Activated B cell treated with CpG ODN at 0.5 μM for 24 hours (primary cell): ENCODE measurements at regions of chr18 and their contacts with region 1.

Region 1: GRCh38 chr18:32092422-32093101 is 888 bp downstream of the RNF138 start:
- DNase-seq: peak; percentile 100
- ATAC-seq: peak; percentile 90
- H3K4me3 Mint-ChIP-seq: peak overlapping the region; percentile 98
- H3K27ac Mint-ChIP-seq: peak overlapping the region; percentile 96
- H3K4me1 Mint-ChIP-seq: peaks cover 44% of the 10 kb centered on the region
- H3K27me3 Mint-ChIP-seq: no peaks in the 10 kb centered on the region
- CTCF ChIP-seq: no peak

Region 2: DNA sequence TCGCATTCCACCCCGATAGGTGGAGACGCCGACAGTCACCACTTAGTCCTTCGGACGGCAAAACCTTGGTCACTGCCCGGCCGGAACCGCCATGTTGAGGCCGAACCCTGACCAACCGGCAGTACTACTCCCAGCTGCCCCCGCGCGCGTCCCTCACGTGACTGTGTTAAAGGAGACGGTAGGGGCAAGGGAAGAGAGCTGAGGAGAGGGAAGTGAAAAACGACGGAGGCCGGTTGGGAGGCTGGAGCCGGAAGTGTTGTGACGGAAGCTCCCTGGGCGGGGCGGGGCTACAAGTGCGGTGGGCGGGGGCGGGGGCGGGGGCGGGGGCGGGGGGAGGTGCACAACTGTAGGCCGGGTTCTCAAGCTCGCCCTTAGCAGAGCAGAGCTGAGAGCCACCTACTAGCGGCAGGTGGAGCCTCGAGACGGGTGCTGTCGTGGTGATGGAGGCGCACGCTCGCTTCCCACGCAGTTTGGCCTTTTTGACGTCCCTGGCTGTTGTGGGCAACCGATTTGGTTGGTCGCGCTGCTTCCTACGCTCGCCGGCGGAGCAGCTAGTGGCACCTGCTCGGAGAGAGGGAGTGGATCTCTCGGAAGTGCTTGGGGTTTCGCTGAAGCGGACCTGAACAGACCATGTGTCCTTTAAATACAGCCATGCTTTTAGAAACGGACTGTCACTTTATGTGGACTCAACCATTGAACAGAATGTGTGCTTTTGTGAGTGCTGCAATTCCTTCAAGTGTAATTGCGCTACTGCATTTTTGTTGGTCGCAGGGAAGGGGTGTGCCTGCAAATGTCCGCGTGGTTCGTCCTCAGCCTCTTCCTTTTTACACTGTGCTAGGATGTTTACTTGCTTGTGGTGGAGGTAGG is 149.3 kb before region 1 on chr18 and contains the start of gene TRAPPC8:
- CTCF ChIA-PET with region 1: no interaction called
- POLR2A ChIA-PET with region 1: interaction called, 110 read pairs
- intact Hi-C with region 1: loop called (anchors 1 kb)
- DNase-seq: peak; percentile 94
- ATAC-seq: peak; percentile 82
- H3K4me3 Mint-ChIP-seq: peak within 1 kb of the TSS; percentile 100
- H3K27ac Mint-ChIP-seq: peak within 1 kb of the TSS; percentile 100
- H3K4me1 Mint-ChIP-seq: peaks cover 48% of the 10 kb centered on the region
- H3K27me3 Mint-ChIP-seq: no peaks in the 10 kb centered on the region
- CTCF ChIP-seq: no peak
- total RNA-seq, gene TRAPPC8: 62.9 and 69.2 TPM in 2 replicates

Region 3: DNA sequence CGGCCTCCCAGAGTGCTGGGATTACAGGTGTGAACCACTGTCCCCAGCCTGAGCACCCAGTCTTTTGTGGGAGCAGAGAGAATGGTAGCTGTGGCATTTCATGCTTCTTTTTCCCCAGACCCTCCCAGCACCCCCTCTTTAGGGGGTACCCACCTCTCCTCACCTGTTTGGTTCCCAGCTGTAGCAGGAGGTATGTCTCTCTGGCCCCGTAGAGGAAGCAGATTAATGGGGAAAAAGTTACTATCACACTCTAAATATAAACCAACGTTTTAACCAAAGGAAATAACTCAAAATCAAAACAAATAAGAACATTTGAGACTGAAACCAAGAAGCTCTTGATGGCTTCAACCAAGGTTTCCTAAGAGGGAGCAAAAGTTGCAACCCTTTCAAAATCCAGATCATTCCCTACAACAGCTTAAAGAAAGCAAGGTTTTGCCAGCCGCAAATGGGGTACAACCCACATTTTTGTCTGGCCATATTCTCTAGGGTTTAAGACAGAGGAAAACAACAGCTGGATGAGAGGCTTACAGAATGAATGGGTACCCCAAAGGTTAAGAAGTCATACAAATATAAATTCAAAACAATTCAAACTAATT is 66.0 kb before region 1 on chr18:
- CTCF ChIA-PET with region 1: no interaction called
- POLR2A ChIA-PET with region 1: interaction called, 10 read pairs
- intact Hi-C with region 1: no loop called
- DNase-seq: no peak
- ATAC-seq: no peak
- H3K4me3 Mint-ChIP-seq: no peak overlapping the region
- H3K27ac Mint-ChIP-seq: no peak overlapping the region
- H3K4me1 Mint-ChIP-seq: peaks cover 27% of the 10 kb centered on the region
- H3K27me3 Mint-ChIP-seq: no peaks in the 10 kb centered on the region
- CTCF ChIP-seq: no peak

Region 4: GRCh38 chr18:32048507-32049091 is 44.0 kb before region 1 on chr18:
- CTCF ChIA-PET with region 1: no interaction called
- POLR2A ChIA-PET with region 1: interaction called, 4 read pairs
- intact Hi-C with region 1: loop called (anchors 2 kb)
- DNase-seq: peak; percentile 18
- ATAC-seq: peak; percentile 61
- H3K4me3 Mint-ChIP-seq: peak overlapping the region; percentile 30
- H3K27ac Mint-ChIP-seq: peak overlapping the region; percentile 80
- H3K4me1 Mint-ChIP-seq: peaks cover 29% of the 10 kb centered on the region
- H3K27me3 Mint-ChIP-seq: no peaks in the 10 kb centered on the region
- CTCF ChIP-seq: no peak

Region 5: DNA sequence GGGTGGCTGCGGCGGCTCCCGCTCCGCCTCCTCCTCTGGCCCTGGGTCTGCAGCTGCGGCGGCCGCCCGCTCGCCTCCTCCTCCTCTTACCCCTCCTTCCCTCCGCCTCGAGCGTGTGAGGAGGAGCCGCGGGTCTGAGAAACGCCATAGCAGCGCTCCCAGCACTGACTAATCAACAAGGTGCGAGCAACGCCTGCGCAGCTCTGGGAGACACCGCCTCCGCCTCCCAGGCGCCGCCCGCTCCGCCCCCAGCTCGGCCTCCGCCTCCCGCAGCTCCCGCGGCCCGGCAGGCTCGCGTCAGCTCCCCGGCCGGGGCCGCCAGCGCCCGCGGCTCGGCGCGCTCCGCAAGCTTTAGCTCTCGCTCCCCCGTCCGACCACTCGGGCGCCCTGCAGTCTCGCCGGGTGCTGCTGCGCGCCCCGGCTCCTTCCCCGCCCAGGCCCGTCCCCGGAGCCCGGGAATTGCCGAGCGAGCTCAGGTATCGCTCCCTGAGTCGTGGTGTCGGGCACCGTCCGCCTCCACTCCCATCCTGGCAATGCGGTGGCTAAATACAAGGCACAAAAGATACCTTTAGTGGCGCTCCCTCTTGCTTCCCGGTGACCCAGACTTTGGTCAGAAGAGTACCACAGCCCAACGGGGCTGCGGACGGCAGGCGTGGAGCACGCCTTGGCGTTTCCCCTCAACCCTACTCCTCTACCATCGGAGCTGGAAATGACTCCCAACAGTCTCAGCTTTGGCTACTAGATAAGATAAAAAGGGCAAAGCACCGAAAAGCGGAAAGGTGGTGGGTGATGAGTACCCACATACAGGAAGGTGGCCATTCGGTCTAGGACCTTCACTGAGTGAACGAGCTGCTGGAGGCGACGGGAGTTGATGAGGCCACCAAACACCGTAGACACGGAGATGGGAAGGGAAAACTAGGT is 378.4 kb after region 1 on chr18 and contains the start of gene GAREM1:
- CTCF ChIA-PET with region 1: no interaction called
- POLR2A ChIA-PET with region 1: no interaction called
- intact Hi-C with region 1: loop called (anchors 2 kb)
- DNase-seq: peak; percentile 67
- ATAC-seq: peak; percentile 95
- H3K4me3 Mint-ChIP-seq: peak within 1 kb of the TSS; percentile 83
- H3K27ac Mint-ChIP-seq: no peak within 1 kb of the TSS
- H3K4me1 Mint-ChIP-seq: peaks cover 27% of the 10 kb centered on the region
- H3K27me3 Mint-ChIP-seq: peaks cover 53% of the 10 kb centered on the region
- CTCF ChIP-seq: no peak
- total RNA-seq, gene GAREM1: not detected in 2 replicates